ENCODE measurements at regions of chr10 and their contacts with region 1.

Region 1: DNA sequence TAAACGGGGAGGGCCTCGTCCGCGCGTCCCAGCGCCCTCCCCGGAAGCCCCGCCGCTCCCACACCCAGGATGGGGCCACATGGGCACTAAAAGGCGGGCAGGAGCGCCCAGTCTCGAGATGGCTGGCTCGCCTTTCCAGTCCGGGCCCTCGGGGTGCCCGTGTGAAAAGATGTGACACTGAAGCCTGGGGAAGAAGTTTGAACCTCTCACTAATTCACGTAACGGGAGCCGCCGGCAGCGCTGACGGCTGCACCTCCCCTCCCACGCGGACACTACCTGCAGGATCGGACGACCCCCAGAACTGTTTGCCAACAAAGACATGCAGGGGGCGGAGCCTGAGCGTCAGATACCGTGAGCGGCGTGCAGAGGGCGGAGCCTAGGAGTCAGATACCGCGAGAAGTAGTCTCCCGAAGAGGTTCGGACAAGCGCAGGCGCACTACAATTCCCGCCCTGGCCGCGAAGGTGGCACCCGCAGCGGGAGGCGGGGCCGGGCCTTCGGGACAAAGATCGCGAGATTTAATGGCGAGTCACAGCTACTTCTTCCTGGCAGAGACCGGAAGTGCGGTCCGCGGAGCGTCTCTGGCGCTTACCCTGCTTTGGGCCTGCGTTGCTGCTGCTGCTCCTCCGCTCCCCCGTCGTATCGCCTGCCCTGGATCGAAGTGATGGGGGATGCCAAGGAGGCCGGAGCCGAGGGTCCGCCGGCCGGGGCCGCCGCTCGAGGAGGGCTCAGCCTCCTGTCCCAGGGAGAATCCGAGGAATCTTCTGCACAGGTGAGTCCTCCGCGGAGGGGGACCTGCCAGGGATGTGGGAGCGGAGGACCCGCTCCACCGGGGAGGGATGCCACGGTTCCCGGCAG is at the start of gene EDRF1:
- H3K4me3 ChIP-seq: peak within 1 kb of the TSS; percentile 71
- H3K27ac ChIP-seq: peak within 1 kb of the TSS; percentile 83
- H3K4me1 ChIP-seq: peaks cover 7% of the 10 kb centered on the region
- CTCF ChIP-seq: no peak

Region 2: DNA sequence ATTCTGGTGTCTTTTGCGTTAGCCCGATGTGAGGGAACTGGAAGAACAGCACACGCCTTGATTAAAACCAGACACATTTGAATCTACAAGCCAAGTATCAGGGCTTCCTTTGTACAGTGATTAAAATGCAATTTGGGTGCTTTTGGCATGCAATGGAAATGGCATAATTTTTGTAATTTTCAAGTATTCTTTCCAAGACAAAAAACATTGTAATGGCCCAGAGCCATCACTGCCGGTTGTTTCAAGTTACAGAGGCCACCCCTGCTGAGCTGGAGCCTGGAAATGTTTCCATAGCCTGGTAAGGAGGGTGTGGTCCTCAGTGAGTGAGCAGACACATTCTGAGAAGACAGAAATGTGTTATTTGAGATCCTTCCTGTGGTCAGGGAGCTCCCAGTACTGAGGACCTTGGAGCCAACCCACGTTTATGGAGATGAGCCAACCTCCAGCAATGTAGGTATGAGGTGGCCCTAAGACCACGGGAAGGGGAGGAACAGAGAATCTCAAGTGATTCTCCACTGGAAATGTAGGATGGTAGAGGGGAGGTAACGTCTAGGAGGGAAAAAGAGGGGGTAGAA is 57.3 kb before region 1 on chr10:
- CTCF ChIA-PET with region 1: no interaction called
- POLR2A ChIA-PET with region 1: interaction called, 11 read pairs
- H3K4me3 ChIP-seq: no peak overlapping the region
- H3K27ac ChIP-seq: peak overlapping the region; percentile 55; the same call in 1 of the 2 replicates
- H3K4me1 ChIP-seq: peaks cover 16% of the 10 kb centered on the region
- CTCF ChIP-seq: no peak

Region 3: GRCh38 chr10:125691160-125691981 is 28.0 kb before region 1 on chr10:
- CTCF ChIA-PET with region 1: no interaction called
- POLR2A ChIA-PET with region 1: interaction called, 10 read pairs
- H3K4me3 ChIP-seq: no peak overlapping the region
- H3K27ac ChIP-seq: peak overlapping the region; percentile 35; the same call in 1 of the 2 replicates
- H3K4me1 ChIP-seq: peaks cover 33% of the 10 kb centered on the region
- CTCF ChIP-seq: no peak

Region 4: GRCh38 chr10:125707541-125708468 is 11.6 kb before region 1 on chr10:
- CTCF ChIA-PET with region 1: no interaction called
- POLR2A ChIA-PET with region 1: interaction called, 14 read pairs
- H3K4me3 ChIP-seq: no peak overlapping the region
- H3K27ac ChIP-seq: peak overlapping the region; percentile 59; the same call in 1 of the 2 replicates
- H3K4me1 ChIP-seq: peaks cover 36% of the 10 kb centered on the region
- CTCF ChIP-seq: no peak

Measured in HEK293 (cell line).